Activated T-helper 1 cell treated with anti-CD3 and anti-CD28 coated beads, Interleukin-12 subunit alpha, Interleukin-12 subunit beta, Interleukin-2, Interleukin-4 antibody, amounts not matched to agents 30 ng/mL and 10 ng/mL and 1 ng/mL, durations not matched to agents 14 hours and 24 hours and 36 hours (primary cell): ENCODE measurements at regions of chr2 and their contacts with region 1.

Region 1: DNA sequence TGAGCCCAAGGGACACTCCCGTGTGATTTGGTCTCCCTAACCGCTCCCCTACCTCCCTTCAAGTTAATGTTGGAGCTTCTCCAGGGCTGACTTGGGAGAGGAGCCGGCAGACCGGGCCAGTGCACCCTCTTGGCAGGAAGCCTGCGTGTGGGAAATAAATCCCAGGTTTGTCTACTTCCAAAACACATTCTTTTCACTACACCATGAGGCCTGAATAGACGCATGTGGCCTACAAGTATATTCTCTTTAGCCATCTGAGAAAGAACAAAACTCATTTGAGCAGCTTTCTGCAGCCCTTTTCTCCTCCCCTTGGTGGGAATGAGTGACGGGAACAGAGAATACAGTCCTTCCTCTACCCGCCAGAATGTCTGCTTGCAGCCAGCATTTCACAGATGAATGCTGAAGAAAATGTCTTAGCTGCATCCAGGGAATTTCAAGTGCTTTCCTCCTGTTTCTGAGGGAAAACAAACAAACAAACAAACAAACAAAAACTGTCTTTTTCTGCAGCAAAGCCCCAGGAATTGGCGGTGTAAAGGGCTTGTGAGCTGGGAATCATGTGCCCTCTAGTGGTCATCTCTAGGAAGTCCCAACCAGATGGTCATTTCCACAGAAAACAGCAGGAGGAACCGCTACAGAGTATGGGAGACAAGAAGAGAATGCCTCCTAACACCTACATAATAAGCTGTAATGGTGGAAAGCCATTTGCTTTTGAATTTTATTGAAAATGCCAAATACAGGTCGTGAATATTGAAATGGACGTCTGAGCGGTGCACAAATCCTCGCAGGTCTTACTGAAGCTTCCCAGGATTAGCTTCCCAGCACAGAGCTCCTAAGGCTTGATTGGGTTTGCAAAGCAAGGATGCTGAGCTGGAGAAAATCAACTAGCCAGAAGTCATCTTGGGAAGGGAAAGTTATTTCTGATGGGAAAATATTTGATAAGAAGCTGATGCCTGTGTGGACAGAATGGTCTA is 41.2 kb upstream of the DAPL1 start:
- DNase-seq: peak; percentile 15
- H3K4me3 Mint-ChIP-seq: no peak overlapping the region
- H3K27ac Mint-ChIP-seq: no peak overlapping the region
- H3K4me1 Mint-ChIP-seq: no peaks in the 10 kb centered on the region
- H3K27me3 Mint-ChIP-seq: peaks cover 3% of the 10 kb centered on the region

Region 2: GRCh38 chr2:158179660-158180059 is 574.3 kb before region 1 on chr2:
- intact Hi-C with region 1: loop called (anchors 1 kb)
- DNase-seq: no peak
- H3K4me3 Mint-ChIP-seq: no peak overlapping the region
- H3K27ac Mint-ChIP-seq: no peak overlapping the region
- H3K4me1 Mint-ChIP-seq: no peaks in the 10 kb centered on the region
- H3K27me3 Mint-ChIP-seq: peaks cover 38% of the 10 kb centered on the region

Region 3: DNA sequence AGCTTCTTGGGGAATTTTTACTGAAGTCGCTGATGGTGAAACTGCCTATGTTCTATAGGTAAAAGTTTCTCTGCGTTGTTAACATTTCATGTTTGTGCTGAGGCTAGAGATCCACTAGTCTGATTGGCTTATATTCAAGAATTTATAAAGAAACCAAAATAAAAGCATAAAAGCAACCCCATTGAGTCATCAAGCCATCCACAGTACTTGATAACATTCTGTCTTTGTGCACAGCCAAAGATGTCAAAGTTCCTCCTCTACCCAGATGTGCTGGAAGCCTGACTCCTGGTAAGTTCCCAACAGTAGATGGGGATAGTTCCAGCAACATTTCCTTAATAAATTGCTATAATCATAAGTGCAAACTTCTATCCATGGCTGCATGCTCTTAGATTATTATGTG is 322.3 kb after region 1 on chr2:
- intact Hi-C with region 1: no loop called
- DNase-seq: no peak
- H3K4me3 Mint-ChIP-seq: no peak overlapping the region
- H3K27ac Mint-ChIP-seq: no peak overlapping the region
- H3K4me1 Mint-ChIP-seq: no peaks in the 10 kb centered on the region
- H3K27me3 Mint-ChIP-seq: peaks cover 4% of the 10 kb centered on the region